ENCODE measurements at regions of chr20 and their contacts with region 1.

Region 1: DNA sequence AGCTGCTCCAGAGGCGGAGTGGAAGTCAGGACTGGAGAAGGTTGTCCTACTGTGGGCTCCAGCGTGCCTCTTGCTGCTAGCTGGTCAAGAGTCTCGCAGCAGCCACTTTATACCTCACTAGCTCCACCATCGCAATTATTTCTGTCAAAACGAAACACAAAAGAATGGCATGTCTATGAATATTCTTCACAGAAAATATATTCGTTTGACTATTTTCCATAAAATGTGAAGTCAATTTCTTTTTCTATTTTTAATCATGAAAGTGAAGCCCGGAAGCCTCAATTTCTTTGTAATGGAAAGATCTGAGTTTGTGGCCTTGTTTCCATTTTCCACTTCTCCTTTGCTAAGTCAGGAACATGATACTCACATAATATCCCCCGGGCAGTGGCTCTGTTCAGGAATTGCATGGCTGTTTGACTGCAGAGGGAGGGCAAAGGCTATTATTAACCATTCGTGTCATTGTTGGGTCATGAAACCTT is 51.7 kb downstream of the DTD1 start:
- DNase-seq: no peak
- H3K4me3 ChIP-seq: no peak overlapping the region
- H3K27ac ChIP-seq: no peak overlapping the region
- H3K4me1 ChIP-seq: no peaks in the 10 kb centered on the region
- H3K27me3 ChIP-seq: no peaks in the 10 kb centered on the region
- CTCF ChIP-seq: no peak
- POLR2A ChIP-seq: no peak

Region 2: DNA sequence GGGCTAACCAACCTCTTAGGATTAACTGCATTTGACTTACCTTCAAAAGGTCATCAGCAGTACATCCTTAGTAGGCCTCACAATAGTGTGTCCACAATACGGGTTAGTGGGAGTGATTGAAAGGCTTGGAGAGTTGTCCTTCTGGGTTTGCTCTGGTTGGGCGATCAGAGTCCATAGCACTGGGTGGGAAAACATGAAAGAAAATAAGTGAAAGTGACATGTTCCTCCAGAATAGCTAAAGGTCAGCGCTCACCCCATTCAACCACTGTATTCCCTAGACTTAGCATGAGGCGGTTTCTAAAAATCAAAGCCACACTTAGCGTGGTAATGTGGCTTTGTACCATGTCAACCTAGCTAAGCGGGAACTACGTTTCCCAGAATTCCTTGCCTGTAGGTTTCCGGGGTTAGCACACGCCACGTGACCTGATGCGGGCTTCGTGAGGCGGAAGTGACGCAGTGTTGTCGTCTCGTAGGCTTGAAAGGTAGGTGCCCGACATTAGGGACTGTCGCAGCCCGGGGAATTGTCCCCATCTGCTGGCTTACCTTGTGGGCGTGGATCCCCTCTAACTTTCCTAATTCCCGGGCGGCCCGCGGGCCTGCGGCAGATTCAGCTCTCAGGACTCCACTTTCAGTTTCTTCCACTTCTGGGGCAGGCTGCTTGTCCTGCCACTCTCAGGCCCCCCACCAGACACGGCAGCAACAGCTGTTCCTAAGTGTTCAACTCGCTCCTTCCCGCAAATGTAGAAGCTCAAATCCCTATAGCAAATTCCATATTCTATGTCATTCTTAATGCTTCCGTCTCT is 154.3 kb after region 1 on chr20:
- intact Hi-C with region 1: loop called (anchors 5 kb)
- DNase-seq: peak; percentile 92
- H3K4me3 ChIP-seq: peak overlapping the region; percentile 60 to 66
- H3K27ac ChIP-seq: peak overlapping the region; percentile 87 to 88
- H3K4me1 ChIP-seq: no peaks in the 10 kb centered on the region
- H3K27me3 ChIP-seq: no peaks in the 10 kb centered on the region
- CTCF ChIP-seq: peak in 1 of 4 experiments; percentile 19
- POLR2A ChIP-seq: peak; percentile 77

Region 3: GRCh38 chr20:19026121-19026878 is 386.8 kb after region 1 on chr20:
- intact Hi-C with region 1: no loop called
- DNase-seq: no peak
- H3K4me3 ChIP-seq: no peak overlapping the region
- H3K27ac ChIP-seq: no peak overlapping the region
- H3K4me1 ChIP-seq: no peaks in the 10 kb centered on the region
- H3K27me3 ChIP-seq: no peaks in the 10 kb centered on the region
- CTCF ChIP-seq: no peak
- POLR2A ChIP-seq: no peak

Region 4: DNA sequence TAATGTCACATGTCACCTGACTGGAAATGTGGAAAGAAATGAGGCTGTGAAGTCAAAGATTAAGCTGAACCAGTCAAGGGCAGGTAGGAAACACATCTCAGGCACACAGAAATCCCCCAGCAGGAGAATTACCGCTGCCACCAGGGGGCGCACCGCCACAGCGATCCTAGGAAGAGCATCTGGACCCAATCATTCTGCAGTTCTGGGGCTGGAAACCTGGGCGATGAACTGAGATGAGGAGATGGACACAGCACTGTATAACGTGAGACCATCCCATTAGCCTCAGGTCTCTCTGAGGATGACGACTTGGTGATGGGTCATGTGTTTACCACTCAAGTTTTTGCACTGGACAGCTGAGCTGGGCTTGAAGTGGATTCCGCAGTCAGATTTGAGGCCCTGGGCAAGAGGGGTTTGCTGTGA is 566.4 kb after region 1 on chr20:
- intact Hi-C with region 1: loop called (anchors 5 kb)
- DNase-seq: peak; percentile 62
- H3K4me3 ChIP-seq: no peak overlapping the region
- H3K27ac ChIP-seq: no peak overlapping the region
- H3K4me1 ChIP-seq: no peaks in the 10 kb centered on the region
- H3K27me3 ChIP-seq: no peaks in the 10 kb centered on the region
- CTCF ChIP-seq: peak; percentile 84 to 96 (median 90)
- POLR2A ChIP-seq: no peak